Right lobe of liver (tissue), 6 donors: ENCODE measurements at regions of chr3 and their contacts with region 1.

Region 1: GRCh38 chr3:43503067-43503728 is 118.6 kb downstream of the ANO10 start:
- DNase-seq: no peak
- ATAC-seq: peak; percentile 59 to 73 (median 64)
- H3K4me3 ChIP-seq: no peak overlapping the region
- H3K27ac ChIP-seq: no peak overlapping the region
- H3K4me1 ChIP-seq: no peaks in the 10 kb centered on the region
- H3K27me3 ChIP-seq: no peaks in the 10 kb centered on the region
- CTCF ChIP-seq: peak; percentile 46 to 58 (median 52)
- POLR2A ChIP-seq: no peak

Region 2: GRCh38 chr3:43162230-43163084 is 340.7 kb before region 1 on chr3:
- intact Hi-C with region 1: loop called in 1 of 2 experiments (anchors 10 kb)
- DNase-seq: no peak
- ATAC-seq: peak; percentile 78 to 89 (median 84)
- H3K4me3 ChIP-seq: no peak overlapping the region
- H3K27ac ChIP-seq: peak overlapping the region in 2 of 3 donors; percentile 26 to 27
- H3K4me1 ChIP-seq: peaks cover 0 to 6% (median 0%) of the 10 kb centered on the region in 4 donors
- H3K27me3 ChIP-seq: no peaks in the 10 kb centered on the region
- CTCF ChIP-seq: peak; percentile 51 to 75 (median 52)
- POLR2A ChIP-seq: no peak